Left ventricle myocardium superior (tissue), 1 donor: ENCODE measurements at regions of chr1 and their contacts with region 1.

Region 1: DNA sequence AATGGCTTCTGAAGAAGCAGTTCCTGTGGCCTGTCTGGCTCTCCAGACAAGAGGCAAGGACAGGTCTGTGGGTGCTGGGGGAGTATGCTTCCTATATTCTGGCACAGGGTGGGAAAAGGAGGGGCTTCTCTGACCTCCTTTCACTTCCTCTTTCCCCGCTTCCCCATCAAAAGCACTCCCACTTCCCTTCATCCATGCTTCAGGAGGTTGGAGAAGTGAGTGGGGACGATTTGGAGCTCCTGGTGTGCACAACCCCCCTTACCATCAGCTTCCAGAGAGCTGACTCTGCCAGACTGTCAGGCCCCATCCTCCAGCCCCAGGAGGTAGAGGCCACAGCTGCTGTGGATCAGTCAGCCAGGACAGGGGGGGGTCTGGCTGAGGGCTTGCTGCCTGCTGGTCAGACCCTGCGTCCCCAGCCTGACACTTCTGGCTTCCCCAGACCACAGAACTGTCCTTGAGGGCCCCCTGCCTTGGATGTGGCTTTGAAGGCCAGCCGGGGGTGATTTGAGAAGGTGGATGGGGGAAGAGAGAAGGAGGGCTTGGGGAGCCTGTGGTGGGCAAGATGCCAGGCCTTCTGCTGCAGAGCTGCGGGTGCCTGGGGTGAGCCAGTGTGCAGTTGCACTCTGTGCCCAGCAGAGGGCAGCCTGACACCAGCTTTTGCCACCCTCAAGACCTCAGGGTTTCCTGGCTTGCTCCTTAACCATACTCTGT is 21.5 kb upstream of the TMEM222 start:
- DNase-seq: peak; percentile 88
- ATAC-seq: peak; percentile 85

Region 2: DNA sequence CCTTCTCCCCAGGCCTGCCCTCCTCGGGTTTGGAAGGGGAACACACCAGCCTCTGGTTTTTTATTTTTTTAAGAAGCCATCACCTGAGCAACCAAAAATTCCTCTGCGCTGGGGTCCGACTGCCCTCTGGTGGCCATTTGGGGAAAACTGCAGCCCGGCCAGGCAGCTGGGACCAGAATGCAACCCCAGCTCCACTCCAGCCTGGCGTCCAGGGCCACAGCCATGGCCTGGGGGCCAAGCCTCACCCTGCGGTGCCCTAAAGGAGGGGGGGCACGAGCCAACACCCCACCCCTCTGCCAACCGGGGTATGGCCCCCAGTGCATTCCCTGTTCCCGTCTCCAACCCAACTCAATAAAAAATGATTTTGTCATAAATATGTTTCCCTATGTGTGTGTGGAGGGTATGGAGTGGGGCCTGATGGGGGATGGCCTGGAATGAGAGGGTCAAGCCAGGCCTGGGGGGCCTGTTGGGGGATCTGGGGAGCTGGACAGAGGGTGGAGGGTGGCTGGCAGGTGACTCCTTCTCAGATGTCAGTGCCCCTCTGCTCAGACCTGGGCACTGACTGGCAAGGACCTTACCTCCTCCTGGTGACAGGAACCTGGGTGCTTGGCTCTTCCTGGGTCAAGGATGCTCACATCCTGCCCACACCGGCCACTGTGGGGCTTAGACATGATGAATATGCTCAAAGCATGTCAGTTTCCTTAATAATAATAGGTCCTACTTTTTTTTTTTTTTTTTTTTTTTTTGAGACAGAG is 95.1 kb after region 1 on chr1:
- intact Hi-C with region 1: loop called (anchors 5 kb)
- DNase-seq: peak; percentile 82
- ATAC-seq: peak; percentile 18